ENCODE measurements at regions of chr17 and their contacts with region 1.

Region 1: DNA sequence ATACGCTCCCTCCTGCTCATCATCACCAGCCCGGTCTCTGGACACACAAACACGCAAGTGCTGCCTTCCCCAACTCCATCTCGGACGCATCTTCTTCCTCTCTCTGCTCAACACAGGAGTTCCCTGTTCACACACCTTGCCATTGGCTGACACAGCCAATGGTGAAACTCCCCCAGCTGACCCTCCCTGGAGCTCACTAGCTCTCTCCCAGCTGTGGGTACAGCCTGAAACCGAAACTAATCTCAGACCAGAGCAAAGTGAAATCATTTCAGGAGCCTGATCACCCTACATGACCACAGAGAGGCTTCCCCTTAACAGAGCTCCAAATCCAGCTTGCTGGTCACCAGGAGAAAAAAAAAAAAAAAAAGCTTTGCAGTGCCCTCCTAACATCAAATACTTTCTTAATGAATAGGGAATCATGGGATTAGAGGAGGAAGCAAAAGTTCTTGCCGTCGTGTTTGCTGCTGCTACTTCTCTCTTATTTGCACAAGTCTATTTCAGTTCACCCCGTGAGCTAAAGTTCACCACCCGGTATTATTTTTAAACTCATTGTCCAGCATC is 8.3 kb downstream of the CUEDC1 start:
- DNase-seq: peak in 7 of 9 donors; percentile 14 to 36 (median 24)
- ATAC-seq: peak; percentile 82
- H3K4me3 ChIP-seq: peak overlapping the region; percentile 56
- H3K4me3 Mint-ChIP-seq: peak overlapping the region; percentile 74 to 99 (median 94)
- H3K27ac ChIP-seq: peak overlapping the region; percentile 15
- H3K27ac Mint-ChIP-seq: peak overlapping the region; percentile 2 to 94 (median 77)
- H3K4me1 ChIP-seq: peaks cover 6 to 9% of the 10 kb centered on the region in 2 donors
- H3K4me1 Mint-ChIP-seq: peaks cover 25 to 42% (median 33%) of the 10 kb centered on the region in 7 donors
- H3K27me3 ChIP-seq: no peaks in the 10 kb centered on the region
- H3K27me3 Mint-ChIP-seq: peaks cover 0 to 41% (median 0%) of the 10 kb centered on the region in 5 donors

Region 2: GRCh38 chr17:57892146-57892828 is 54.6 kb before region 1 on chr17:
- CTCF ChIA-PET with region 1: interaction called, 3 read pairs
- POLR2A ChIA-PET with region 1: no interaction called
- intact Hi-C with region 1: loop called in 1 of 2 experiments (anchors 10 kb)
- DNase-seq: peak; percentile 44 to 81 (median 65)
- ATAC-seq: peak; percentile 87
- H3K4me3 ChIP-seq: no peak overlapping the region
- H3K4me3 Mint-ChIP-seq: no peak overlapping the region
- H3K27ac ChIP-seq: no peak overlapping the region
- H3K27ac Mint-ChIP-seq: no peak overlapping the region
- H3K4me1 ChIP-seq: no peaks in the 10 kb centered on the region
- H3K4me1 Mint-ChIP-seq: peaks cover 0 to 9% (median 4%) of the 10 kb centered on the region in 7 donors
- H3K27me3 ChIP-seq: no peaks in the 10 kb centered on the region
- H3K27me3 Mint-ChIP-seq: peaks cover 0 to 12% (median 0%) of the 10 kb centered on the region in 5 donors

Region 3: DNA sequence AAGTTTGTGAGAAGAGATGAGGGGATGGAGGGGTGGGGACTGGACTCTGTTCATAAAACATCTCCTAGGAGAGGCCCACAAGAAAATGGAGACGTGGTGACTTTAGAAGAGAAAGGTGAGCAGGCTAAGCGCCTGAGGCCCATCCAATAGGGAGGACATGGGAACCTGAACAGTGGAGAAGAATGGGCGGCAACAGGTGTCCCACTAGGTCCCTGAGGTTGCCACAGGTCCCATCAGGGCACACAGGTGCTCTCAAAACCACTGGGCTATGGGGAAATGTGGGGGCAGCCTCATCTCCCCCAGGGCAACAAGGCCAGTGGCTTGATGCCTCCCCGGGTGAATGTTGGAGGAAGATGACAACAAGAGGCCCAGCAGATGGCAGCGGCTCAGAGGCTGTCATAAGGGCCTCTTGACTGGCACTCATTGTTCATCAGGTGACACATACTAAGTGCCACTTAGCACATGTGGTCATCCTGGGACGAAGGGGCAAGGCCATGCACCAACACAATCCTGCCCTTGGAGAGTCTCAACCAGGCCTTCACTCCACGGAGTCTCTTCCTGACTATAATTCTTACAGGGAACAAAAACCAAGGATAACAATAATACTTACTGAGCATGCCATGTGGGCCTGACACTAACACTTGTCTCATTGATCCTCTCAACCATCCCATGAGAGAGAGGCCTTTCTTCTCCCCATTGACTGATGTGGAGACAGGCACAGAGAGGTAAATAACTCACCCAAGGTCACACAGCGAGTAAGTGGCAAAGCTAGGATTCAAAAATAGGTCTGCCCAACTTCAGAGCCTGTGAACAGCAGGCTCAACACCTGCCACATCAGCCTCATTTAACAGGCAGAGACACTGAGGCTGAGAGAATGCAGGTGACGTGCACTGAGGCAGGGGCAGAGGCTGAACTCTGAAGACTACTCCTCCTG is 29.7 kb before region 1 on chr17:
- CTCF ChIA-PET with region 1: interaction called, 3 read pairs
- POLR2A ChIA-PET with region 1: interaction called, 4 read pairs
- intact Hi-C with region 1: loop called in 1 of 2 experiments (anchors 1 kb)
- DNase-seq: peak in 5 of 9 donors; percentile 8 to 45 (median 33)
- ATAC-seq: peak; percentile 68
- H3K4me3 ChIP-seq: no peak overlapping the region
- H3K4me3 Mint-ChIP-seq: no peak overlapping the region
- H3K27ac ChIP-seq: no peak overlapping the region
- H3K27ac Mint-ChIP-seq: peak overlapping the region in 1 of 9 donors; percentile 31
- H3K4me1 ChIP-seq: no peaks in the 10 kb centered on the region
- H3K4me1 Mint-ChIP-seq: peaks cover 0 to 3% (median 0%) of the 10 kb centered on the region in 7 donors
- H3K27me3 ChIP-seq: no peaks in the 10 kb centered on the region
- H3K27me3 Mint-ChIP-seq: peaks cover 0 to 25% (median 0%) of the 10 kb centered on the region in 5 donors

Region 4: DNA sequence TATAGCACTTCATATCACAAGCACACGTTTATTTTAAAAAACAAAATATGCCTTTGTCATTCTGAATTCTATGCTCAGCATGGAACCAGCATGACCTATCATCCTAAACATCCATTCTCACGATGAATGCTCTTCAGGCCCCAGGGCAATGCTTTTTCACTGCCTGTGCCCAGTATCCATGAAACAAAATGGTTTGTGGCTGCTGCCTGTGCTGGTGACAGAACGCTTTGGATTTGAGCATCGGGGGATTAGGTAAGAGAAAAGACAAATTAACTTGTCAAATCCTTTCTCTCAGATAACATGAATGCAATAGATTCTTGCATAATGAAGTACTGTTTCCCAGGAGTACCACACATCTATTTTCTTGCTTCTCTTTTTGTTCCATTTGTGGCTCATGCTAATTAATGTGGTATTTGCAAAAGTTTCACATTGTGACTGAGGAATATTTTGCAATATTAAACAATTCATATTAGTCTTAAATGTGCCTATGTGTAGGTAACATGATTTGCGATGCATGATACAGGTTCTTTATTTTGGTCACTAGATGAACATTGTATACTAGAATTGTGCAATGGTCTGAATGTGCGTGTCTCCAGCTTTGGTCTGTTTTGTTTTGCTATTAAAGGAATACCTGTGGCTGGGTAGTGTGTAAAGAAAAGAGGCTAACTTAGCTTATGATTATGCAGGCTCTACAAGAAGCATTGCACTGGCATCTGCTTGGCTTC is 86.0 kb after region 1 on chr17:
- CTCF ChIA-PET with region 1: no interaction called
- POLR2A ChIA-PET with region 1: no interaction called
- intact Hi-C with region 1: no loop called
- DNase-seq: no peak
- ATAC-seq: no peak
- H3K4me3 ChIP-seq: no peak overlapping the region
- H3K4me3 Mint-ChIP-seq: no peak overlapping the region
- H3K27ac ChIP-seq: no peak overlapping the region
- H3K27ac Mint-ChIP-seq: no peak overlapping the region
- H3K4me1 ChIP-seq: no peaks in the 10 kb centered on the region
- H3K4me1 Mint-ChIP-seq: peaks cover 0 to 2% (median 0%) of the 10 kb centered on the region in 7 donors
- H3K27me3 ChIP-seq: no peaks in the 10 kb centered on the region
- H3K27me3 Mint-ChIP-seq: peaks cover 3 to 27% (median 21%) of the 10 kb centered on the region in 5 donors